Mammary epithelial cell (primary cell): ENCODE measurements at regions of chr17 and their contacts with region 1.

Region 1: GRCh38 chr17:2796164-2797125 is at the start of gene RAP1GAP2:
- DNase-seq: no peak
- H3K4me3 ChIP-seq: no peak within 1 kb of the TSS
- H3K27ac ChIP-seq: no peak within 1 kb of the TSS
- H3K4me1 ChIP-seq: no peaks in the 10 kb centered on the region
- H3K27me3 ChIP-seq: no peaks in the 10 kb centered on the region
- CTCF ChIP-seq: no peak
- total RNA-seq, gene RAP1GAP2: 22.3 to 41.2 TPM

Region 2: GRCh38 chr17:2724778-2725164 is 71.7 kb before region 1 on chr17:
- CTCF ChIA-PET with region 1: no interaction called
- dilution Hi-C with region 1: loop called (anchors 5 kb)
- in situ Hi-C with region 1: no loop called
- intact Hi-C with region 1: no loop called
- DNase-seq: peak; percentile 46
- H3K4me3 ChIP-seq: no peak overlapping the region
- H3K27ac ChIP-seq: no peak overlapping the region
- H3K4me1 ChIP-seq: no peaks in the 10 kb centered on the region
- H3K27me3 ChIP-seq: peaks cover 8% of the 10 kb centered on the region
- CTCF ChIP-seq: no peak